ENCODE measurements at regions of chr21 and their contacts with region 1.

Region 1: DNA sequence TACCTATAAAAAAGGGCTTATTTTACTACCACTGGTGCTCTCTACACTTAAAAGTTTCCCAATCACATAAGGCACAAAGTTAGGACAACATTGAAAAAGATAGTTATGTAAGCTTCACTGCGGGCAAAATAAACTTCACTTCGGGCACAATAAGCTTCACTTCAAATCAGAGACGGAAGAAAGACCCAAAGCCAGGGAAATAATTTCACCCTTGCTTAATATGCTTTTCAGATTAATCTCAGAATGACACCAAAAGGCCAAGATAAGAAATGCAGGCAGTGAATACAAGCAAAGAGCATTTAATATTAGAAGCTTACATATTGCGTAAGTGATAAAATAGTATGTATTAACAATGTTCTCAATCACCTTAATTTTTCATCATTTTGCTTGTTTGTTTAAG is 444.2 kb downstream of the SETD4 start:
- DNase-seq: peak in 2 of 5 donors; percentile 2 to 4
- H3K4me3 ChIP-seq: no peak overlapping the region
- H3K4me3 Mint-ChIP-seq: no peak overlapping the region
- H3K27ac ChIP-seq: no peak overlapping the region
- H3K27ac Mint-ChIP-seq: no peak overlapping the region
- H3K4me1 ChIP-seq: no peaks in the 10 kb centered on the region
- H3K4me1 Mint-ChIP-seq: no peaks in the 10 kb centered on the region
- H3K27me3 ChIP-seq: no peaks in the 10 kb centered on the region
- H3K27me3 Mint-ChIP-seq: peaks cover 7 to 9% of the 10 kb centered on the region in 2 donors

Region 2: DNA sequence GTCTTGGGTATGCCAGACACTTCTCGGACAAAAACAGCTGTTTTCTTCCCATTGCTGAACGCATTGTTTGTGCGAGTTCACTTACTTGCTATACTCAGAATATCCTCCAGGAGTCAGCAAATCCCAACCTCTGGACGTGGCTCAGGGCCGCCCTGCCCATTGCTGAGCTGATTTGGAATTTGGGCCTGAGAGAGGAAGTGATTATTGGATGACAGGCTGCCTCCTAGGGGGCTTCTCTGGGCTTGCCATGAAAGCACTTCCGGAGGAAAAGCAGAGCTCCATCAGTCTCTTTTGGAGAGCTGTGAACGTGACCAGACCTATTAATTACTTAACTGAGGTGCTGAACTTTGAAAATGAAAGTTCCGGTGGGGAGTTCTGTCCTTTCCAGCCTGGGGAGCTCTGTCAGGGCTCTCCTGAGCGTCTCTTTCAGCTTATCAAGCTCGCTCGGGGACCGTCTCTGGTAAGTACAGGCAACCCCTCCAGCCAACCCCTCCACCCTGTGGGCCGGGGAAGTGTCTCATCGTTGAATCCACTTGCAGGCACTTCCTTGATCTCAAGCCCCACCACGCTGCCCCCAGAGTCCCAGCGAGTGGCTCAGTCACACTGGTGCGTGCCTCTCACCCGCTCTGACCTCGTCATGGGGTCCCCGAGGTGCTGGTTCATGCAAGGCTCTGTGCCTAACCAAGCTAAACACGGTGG is 870.4 kb before region 1 on chr21:
- CTCF ChIA-PET with region 1: interaction called, 3 read pairs
- POLR2A ChIA-PET with region 1: no interaction called
- intact Hi-C with region 1: loop called (anchors 1 kb)
- DNase-seq: peak; percentile 43 to 63 (median 53)
- H3K4me3 ChIP-seq: no peak overlapping the region
- H3K4me3 Mint-ChIP-seq: peak overlapping the region in 3 of 8 donors; percentile 17 to 55 (median 50)
- H3K27ac ChIP-seq: no peak overlapping the region
- H3K27ac Mint-ChIP-seq: no peak overlapping the region
- H3K4me1 ChIP-seq: peaks cover 8% of the 10 kb centered on the region
- H3K4me1 Mint-ChIP-seq: peaks cover 0 to 4% (median 2%) of the 10 kb centered on the region in 4 donors
- H3K27me3 ChIP-seq: no peaks in the 10 kb centered on the region
- H3K27me3 Mint-ChIP-seq: peaks cover 7 to 8% of the 10 kb centered on the region in 2 donors